ENCODE measurements at regions of chr2 and their contacts with region 1.

Region 1: DNA sequence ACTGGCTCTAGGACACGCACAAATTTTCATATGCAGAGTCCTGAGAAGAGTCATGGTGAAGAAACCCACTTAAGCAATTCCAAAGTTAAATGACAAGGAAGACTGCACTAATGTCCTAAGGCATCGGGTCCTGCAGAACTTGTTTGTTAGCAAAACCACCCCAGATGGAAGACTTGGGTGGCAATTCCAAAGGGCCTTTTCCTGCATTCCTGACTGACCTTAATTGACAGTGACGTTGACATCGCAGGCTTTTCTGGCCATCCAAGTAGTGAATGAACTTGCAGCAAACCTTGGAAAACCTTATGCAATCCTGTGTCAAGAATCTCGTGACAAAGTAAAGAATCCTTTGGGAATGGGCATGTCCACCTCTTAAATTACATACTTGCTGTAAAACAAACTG is 112.5 kb upstream of the SH3BP4 start:
- DNase-seq: no peak

Region 2: GRCh38 chr2:234881413-234882241 is 42.4 kb after region 1 on chr2:
- CTCF ChIA-PET with region 1: interaction called, 10 read pairs
- POLR2A ChIA-PET with region 1: no interaction called
- DNase-seq: peak; percentile 90

Region 3: GRCh38 chr2:234911271-234911670 is 72.0 kb after region 1 on chr2:
- CTCF ChIA-PET with region 1: no interaction called
- POLR2A ChIA-PET with region 1: no interaction called
- DNase-seq: no peak

Measured in HEK293T (cell line).